Activated CD4-positive, alpha-beta T cell treated with anti-CD3 and anti-CD28 coated beads, Interleukin-2, amount 10 ng/mL, durations not matched to agents 24 days and 14 days (primary cell): ENCODE measurements at regions of chr5 and their contacts with region 1.

Region 1: GRCh38 chr5:6632917-6633468 is at the starts of genes NSUN2 and SRD5A1:
- DNase-seq: peak; percentile 97
- H3K4me3 Mint-ChIP-seq: peak within 1 kb of the TSS; percentile 100
- H3K27ac Mint-ChIP-seq: peak within 1 kb of the TSS; percentile 99
- H3K4me1 Mint-ChIP-seq: peaks cover 40% of the 10 kb centered on the region
- H3K27me3 Mint-ChIP-seq: no peaks in the 10 kb centered on the region
- total RNA-seq, gene NSUN2: 138 and 140 TPM in 2 replicates
- total RNA-seq, gene SRD5A1: 14.8 and 16.6 TPM in 2 replicates

Region 2: DNA sequence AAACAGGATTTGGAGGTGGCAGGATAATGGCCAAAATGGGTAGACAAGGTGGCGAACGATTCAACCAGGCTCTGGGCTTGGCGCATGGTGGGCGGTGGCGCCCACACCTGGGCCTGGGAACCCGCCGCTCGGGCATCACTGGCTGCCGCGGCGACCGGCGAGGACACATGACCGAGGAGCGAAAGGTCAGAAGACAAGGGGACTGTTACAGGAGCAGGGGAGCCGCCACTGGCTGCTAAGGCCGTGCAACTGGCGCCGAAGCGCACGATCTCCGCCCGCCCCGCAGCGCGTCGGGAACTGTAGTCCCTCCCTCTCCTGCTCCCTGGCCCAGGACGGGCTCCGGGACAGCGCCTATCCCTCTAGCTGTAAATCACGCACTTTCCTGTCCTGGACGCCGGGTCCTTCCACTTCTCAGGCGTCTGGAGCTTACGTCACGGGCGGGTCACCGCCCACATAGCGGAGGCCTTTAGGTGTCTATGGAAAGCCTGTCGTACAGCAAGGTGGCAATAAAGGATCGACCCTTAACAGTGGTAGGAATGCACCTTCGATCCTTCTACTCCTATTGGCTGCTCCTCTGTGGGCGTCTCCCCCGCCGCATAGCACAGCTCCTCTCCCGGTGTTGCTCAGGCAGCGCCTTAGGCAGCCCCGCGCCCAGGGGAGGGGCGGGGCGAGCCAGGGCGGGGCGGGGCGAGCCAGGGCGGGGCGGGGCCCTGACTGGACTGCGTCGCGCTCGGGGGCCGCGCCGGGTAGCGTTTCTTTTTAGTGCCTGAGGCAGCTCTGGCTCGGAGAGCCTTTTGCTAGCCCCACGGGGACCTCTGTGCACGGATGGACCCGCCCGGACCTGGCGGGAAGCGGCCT is 1210.8 kb before region 1 on chr5 and contains the start of gene ICE1:
- intact Hi-C with region 1: loop called (anchors 1 kb)
- DNase-seq: peak; percentile 98
- H3K4me3 Mint-ChIP-seq: peak within 1 kb of the TSS; percentile 97
- H3K27ac Mint-ChIP-seq: peak within 1 kb of the TSS; percentile 98
- H3K4me1 Mint-ChIP-seq: peaks cover 22% of the 10 kb centered on the region
- H3K27me3 Mint-ChIP-seq: no peaks in the 10 kb centered on the region
- total RNA-seq, gene ICE1: 35.6 and 36.9 TPM in 2 replicates

Region 3: GRCh38 chr5:6712577-6713275 is 79.7 kb after region 1 on chr5:
- intact Hi-C with region 1: loop called (anchors 1 kb)
- DNase-seq: peak; percentile 99
- H3K4me3 Mint-ChIP-seq: peak overlapping the region; percentile 89
- H3K27ac Mint-ChIP-seq: peak overlapping the region; percentile 97
- H3K4me1 Mint-ChIP-seq: peaks cover 35% of the 10 kb centered on the region
- H3K27me3 Mint-ChIP-seq: no peaks in the 10 kb centered on the region

Region 4: DNA sequence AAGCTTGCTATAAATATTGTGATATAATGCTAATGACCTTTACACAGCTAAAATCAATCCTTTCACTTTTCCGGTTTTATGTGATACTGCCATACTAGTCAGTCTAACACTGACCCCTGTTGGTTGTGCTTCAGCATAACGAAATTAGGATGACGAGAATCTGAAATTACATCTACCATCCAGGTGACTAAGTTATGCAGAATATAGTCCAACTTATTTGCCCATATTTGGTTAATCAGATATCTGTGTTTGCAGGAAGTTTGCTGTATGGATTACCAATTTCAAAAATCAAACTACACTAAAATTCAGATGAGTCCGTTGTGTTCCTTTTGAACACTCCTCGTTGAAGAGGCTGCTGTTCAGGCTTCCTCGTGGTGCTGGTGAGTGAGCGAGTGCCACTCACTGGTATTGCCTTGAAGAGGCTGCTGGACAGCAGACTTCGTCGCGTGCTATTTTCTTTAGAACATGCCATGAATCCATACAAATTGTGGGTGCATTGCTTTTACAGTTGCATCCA is 112.8 kb after region 1 on chr5:
- intact Hi-C with region 1: loop called (anchors 1 kb)
- DNase-seq: peak; percentile 79
- H3K4me3 Mint-ChIP-seq: no peak overlapping the region
- H3K27ac Mint-ChIP-seq: no peak overlapping the region
- H3K4me1 Mint-ChIP-seq: peaks cover 11% of the 10 kb centered on the region
- H3K27me3 Mint-ChIP-seq: no peaks in the 10 kb centered on the region

Region 5: GRCh38 chr5:7868773-7869473 is 1235.9 kb after region 1 on chr5 and contains the starts of genes FASTKD3 and MTRR:
- intact Hi-C with region 1: loop called (anchors 1 kb)
- DNase-seq: peak; percentile 97
- H3K4me3 Mint-ChIP-seq: peak within 1 kb of the TSS; percentile 99
- H3K27ac Mint-ChIP-seq: peak within 1 kb of the TSS; percentile 92
- H3K4me1 Mint-ChIP-seq: peaks cover 64% of the 10 kb centered on the region
- H3K27me3 Mint-ChIP-seq: no peaks in the 10 kb centered on the region
- total RNA-seq, gene FASTKD3: 17.7 and 18.3 TPM in 2 replicates
- total RNA-seq, gene MTRR: 64.4 and 76.8 TPM in 2 replicates